ENCODE measurements at regions of chr21 and their contacts with region 1.

Region 1: DNA sequence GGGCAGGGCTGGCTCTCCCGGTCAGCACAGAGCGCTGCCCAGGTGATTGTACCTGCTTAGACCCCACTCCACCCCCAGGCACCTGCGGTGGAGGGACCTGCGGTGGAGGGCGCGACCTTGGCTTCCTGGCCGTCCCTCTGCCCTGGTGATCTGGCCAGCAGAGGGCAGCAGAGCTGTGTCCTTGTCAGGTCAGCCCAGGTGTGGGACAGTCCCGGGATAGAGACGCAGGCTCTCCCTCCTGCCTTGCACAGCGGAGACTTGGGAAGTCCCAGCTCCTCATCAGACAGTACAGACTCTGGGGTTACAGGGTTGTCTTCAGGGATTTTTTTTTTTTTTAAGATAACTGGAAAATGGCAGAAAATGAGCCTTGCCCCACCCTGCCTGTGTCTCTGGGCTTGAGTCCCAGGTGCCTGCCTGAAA is 10.0 kb downstream of the SLX9 start:
- DNase-seq: peak; percentile 95
- H3K4me3 ChIP-seq: peak overlapping the region in 1 of 2 experiments; percentile 33; a peak in 1 of 4 replicates
- H3K27ac ChIP-seq: no peak overlapping the region
- H3K4me1 ChIP-seq: peaks cover 0 to 2% of the 10 kb centered on the region in 2 experiments; a peak in 1 of 4 replicates
- H3K27me3 ChIP-seq: no peaks in the 10 kb centered on the region
- CTCF ChIP-seq: peak; percentile 93
- EP300 ChIP-seq: no peak
- RAD21 ChIP-seq: peak; percentile 91

Region 2: DNA sequence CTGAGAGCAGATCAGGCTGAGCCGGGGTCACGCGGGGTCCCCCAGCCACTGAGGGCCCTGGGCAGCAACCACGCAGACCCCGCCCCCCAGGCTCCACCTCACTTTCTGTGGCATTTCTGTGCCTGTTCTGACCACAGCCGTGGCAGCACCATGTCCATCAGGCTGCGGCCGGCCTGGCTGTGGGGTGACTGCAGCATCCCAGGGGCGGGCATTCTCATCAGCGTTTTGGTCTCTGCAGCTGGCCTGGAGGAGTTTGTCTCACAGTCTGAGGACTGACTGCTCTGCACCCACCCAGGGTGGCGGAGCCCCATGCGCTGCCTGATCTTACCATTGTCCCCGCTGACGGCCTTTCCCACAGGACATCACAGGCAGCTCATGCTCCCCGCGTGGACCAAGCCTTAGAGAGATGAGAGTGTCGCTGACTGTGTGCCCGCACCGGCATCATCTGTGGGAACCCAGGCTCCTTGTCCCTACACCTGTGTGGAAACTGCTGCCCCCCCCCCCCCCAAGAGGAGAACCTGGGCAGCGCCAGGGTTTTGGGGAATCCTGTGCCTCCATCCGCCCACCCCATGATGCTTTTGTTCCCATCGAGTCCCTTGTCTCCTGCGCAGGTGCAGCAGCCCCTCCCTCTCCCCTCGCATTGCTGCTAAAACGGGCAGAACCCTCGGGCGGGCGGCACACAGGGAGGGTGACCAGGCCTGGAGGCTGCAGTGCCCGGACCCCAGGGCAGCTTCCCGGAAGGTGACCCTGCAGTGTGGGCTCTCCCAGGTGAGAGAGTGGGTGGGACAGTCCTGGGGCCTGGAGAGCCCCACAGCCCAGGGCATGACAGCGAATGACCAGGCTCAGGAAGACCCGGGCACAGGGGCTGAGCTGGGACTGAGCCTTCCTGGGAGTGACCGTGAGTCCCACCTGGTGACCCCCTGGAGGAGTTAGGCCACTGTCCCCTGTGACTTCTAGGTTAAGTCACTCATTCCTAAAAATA is 411.6 kb before region 1 on chr21:
- CTCF ChIA-PET with region 1: no interaction called
- POLR2A ChIA-PET with region 1: no interaction called
- DNase-seq: no peak
- H3K4me3 ChIP-seq: no peak overlapping the region
- H3K27ac ChIP-seq: no peak overlapping the region
- H3K4me1 ChIP-seq: no peaks in the 10 kb centered on the region
- H3K27me3 ChIP-seq: peaks cover 19% of the 10 kb centered on the region; the same call in 1 of the 2 replicates
- CTCF ChIP-seq: no peak
- EP300 ChIP-seq: no peak
- RAD21 ChIP-seq: no peak

Region 3: GRCh38 chr21:44965251-44966022 is 15.6 kb after region 1 on chr21:
- CTCF ChIA-PET with region 1: interaction called, 35 read pairs
- POLR2A ChIA-PET with region 1: no interaction called
- DNase-seq: no peak
- H3K4me3 ChIP-seq: no peak overlapping the region
- H3K27ac ChIP-seq: peak overlapping the region in 1 of 2 experiments; percentile 73; a peak in 2 of 4 replicates
- H3K4me1 ChIP-seq: peaks cover 22 to 28% of the 10 kb centered on the region in 2 experiments; a peak in 3 of 4 replicates
- H3K27me3 ChIP-seq: no peaks in the 10 kb centered on the region
- CTCF ChIP-seq: no peak
- EP300 ChIP-seq: no peak
- RAD21 ChIP-seq: no peak

Region 4: GRCh38 chr21:45074048-45074817 is 124.4 kb after region 1 on chr21 and contains the start of gene ADARB1:
- CTCF ChIA-PET with region 1: interaction called, 14 read pairs
- POLR2A ChIA-PET with region 1: no interaction called
- DNase-seq: peak; percentile 98
- H3K4me3 ChIP-seq: peak within 1 kb of the TSS; percentile 80 to 93
- H3K27ac ChIP-seq: peak within 1 kb of the TSS; percentile 52 to 86; a peak in 3 of 4 replicates
- H3K4me1 ChIP-seq: peaks cover 10 to 25% of the 10 kb centered on the region in 2 experiments; a peak in 3 of 4 replicates
- H3K27me3 ChIP-seq: no peaks in the 10 kb centered on the region
- CTCF ChIP-seq: no peak
- EP300 ChIP-seq: no peak
- RAD21 ChIP-seq: no peak
- polyA plus RNA-seq, gene ADARB1: 7.6 and 7.8 TPM in 2 replicates

Region 5: GRCh38 chr21:45104560-45104959 is 154.8 kb after region 1 on chr21:
- CTCF ChIA-PET with region 1: interaction called, 24 read pairs
- POLR2A ChIA-PET with region 1: no interaction called
- DNase-seq: peak; percentile 52
- H3K4me3 ChIP-seq: no peak overlapping the region
- H3K27ac ChIP-seq: no peak overlapping the region
- H3K4me1 ChIP-seq: peaks cover 18 to 31% of the 10 kb centered on the region in 2 experiments; a peak in 2 of 4 replicates
- H3K27me3 ChIP-seq: no peaks in the 10 kb centered on the region
- CTCF ChIP-seq: no peak
- EP300 ChIP-seq: no peak
- RAD21 ChIP-seq: no peak

Region 6: DNA sequence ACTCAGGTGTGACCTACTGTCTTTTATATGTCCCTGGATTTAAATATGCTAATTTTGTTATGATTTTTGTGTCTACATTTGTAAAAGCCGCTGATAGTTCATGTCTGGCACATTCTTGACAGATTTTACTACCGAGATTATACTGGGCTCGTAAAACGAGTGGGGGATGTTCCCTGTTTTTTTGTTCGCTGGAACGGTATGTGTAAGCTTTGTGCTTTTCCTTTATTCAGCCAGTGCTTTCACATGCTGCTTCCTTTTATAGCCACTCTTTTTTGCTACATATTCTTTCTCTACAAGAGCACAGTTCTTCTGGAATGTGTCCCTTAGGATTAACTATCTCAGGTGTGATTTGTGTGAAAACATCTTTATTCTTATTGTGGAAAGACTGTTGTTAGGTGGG is 171.2 kb after region 1 on chr21:
- CTCF ChIA-PET with region 1: interaction called, 334 read pairs
- POLR2A ChIA-PET with region 1: no interaction called
- DNase-seq: no peak
- H3K4me3 ChIP-seq: no peak overlapping the region
- H3K27ac ChIP-seq: no peak overlapping the region
- H3K4me1 ChIP-seq: peaks cover 0 to 15% of the 10 kb centered on the region in 2 experiments; a peak in 1 of 4 replicates
- H3K27me3 ChIP-seq: no peaks in the 10 kb centered on the region
- CTCF ChIP-seq: no peak
- EP300 ChIP-seq: no peak
- RAD21 ChIP-seq: no peak

Measured in SK-N-SH (cell line).